ENCODE measurements at regions of chr5 and their contacts with region 1.

Region 1: GRCh38 chr5:172194985-172195774 is 1.2 kb downstream of the EFCAB9 start:
- DNase-seq: no peak
- H3K4me3 Mint-ChIP-seq: no peak overlapping the region
- H3K27ac Mint-ChIP-seq: no peak overlapping the region
- H3K4me1 Mint-ChIP-seq: no peaks in the 10 kb centered on the region
- H3K27me3 Mint-ChIP-seq: peaks cover 2% of the 10 kb centered on the region
- CTCF ChIP-seq: no peak

Region 2: GRCh38 chr5:172059661-172060100 is 135.5 kb before region 1 on chr5:
- CTCF ChIA-PET with region 1: interaction called, 10 read pairs
- intact Hi-C with region 1: no loop called
- DNase-seq: no peak
- H3K4me3 Mint-ChIP-seq: no peak overlapping the region
- H3K27ac Mint-ChIP-seq: no peak overlapping the region
- H3K4me1 Mint-ChIP-seq: no peaks in the 10 kb centered on the region
- H3K27me3 Mint-ChIP-seq: no peaks in the 10 kb centered on the region
- CTCF ChIP-seq: peak; percentile 74

Region 3: DNA sequence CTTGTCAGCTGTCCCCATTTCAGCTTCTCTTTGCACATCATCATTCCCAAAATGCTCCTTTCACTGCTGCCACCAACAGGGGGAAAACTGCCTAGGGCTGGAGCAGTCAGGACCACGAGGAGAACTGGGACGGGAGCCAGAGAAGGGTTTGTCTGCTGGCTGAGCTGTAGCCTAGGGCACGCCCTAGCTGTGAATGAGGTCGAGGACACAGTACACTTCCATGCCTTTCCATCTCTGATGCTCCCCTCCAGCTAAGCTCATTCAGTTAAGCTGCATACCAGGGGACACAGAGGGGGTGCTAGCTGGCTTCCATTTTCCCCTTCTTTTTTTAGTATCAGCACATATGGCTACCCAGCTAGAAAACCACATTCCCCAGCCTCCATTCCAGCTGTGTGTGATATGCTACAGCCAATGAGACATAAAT is 71.9 kb before region 1 on chr5:
- CTCF ChIA-PET with region 1: no interaction called
- intact Hi-C with region 1: no loop called
- DNase-seq: no peak
- H3K4me3 Mint-ChIP-seq: no peak overlapping the region
- H3K27ac Mint-ChIP-seq: no peak overlapping the region
- H3K4me1 Mint-ChIP-seq: no peaks in the 10 kb centered on the region
- H3K27me3 Mint-ChIP-seq: no peaks in the 10 kb centered on the region
- CTCF ChIP-seq: no peak

Region 4: DNA sequence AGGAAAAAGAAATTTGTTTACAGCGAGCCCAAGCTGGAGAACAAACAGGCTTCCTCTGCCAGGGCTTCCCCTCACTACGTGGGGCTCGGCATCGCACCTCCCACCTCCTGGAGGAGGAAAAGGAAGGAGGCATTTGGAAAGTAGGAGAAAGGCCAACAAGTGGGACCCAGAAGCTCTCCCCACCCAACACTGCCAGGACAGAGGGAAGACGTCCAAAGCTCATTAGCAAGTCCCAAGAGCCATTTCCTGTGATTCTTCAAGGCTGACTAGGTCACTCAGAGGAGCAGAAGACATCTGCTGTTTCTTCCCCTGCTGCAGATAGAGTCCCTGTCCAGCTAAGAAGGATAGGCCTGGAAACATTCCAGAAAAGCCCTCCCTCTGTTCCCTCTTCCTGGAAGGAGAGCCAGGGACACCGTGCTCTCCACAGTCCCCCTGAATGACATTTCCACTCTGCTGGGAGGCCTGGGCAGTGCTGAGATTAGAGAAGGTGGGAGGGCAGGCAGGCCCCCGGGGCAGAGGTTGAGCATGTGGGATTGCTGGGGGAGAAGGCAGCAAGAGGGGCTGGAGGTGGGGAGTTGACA is 388.8 kb after region 1 on chr5:
- CTCF ChIA-PET with region 1: no interaction called
- intact Hi-C with region 1: no loop called
- DNase-seq: no peak
- H3K4me3 Mint-ChIP-seq: no peak overlapping the region
- H3K27ac Mint-ChIP-seq: no peak overlapping the region
- H3K4me1 Mint-ChIP-seq: no peaks in the 10 kb centered on the region
- H3K27me3 Mint-ChIP-seq: peaks cover 100% of the 10 kb centered on the region
- CTCF ChIP-seq: no peak

Measured in Calu3 (cell line).